ENCODE measurements at regions of chr2 and their contacts with region 1.

Region 1: GRCh38 chr2:25878361-25879132 is at the start of gene ASXL2:
- DNase-seq: peak; percentile 97
- ATAC-seq: peak; percentile 92
- H3K4me3 ChIP-seq: peak within 1 kb of the TSS; percentile 97 to 100 (median 99)
- H3K27ac ChIP-seq: peak within 1 kb of the TSS; percentile 88
- H3K4me1 ChIP-seq: peaks cover 65% of the 10 kb centered on the region
- H3K27me3 ChIP-seq: no peaks in the 10 kb centered on the region; a peak in 1 of 5 replicates
- CTCF ChIP-seq: peak; percentile 45
- EP300 ChIP-seq: no peak
- POLR2A ChIP-seq: peak; percentile 95 to 96
- RAD21 ChIP-seq: peak; percentile 58
- total RNA-seq, gene ASXL2: 12.1 and 20.6 TPM in 2 replicates

Region 2: DNA sequence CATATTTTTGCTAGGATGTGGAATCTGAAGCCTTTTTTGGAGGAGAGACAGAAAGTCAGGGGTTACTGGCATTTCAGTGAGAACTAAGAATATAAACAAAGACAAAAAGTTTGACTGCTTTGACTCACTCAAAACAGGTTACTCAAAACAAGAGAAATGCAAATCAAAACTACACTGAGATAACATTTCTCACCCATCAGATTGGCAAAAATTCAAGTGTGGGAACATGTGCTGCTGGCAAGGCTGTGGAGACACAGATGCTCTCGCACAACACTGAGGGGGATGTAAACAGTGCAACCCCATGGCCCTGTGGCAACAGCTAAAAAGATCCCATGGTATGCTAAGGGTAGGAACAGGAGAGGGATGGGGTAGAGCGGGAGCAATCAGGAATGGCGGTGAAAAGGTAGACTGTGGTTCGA is 291.8 kb before region 1 on chr2:
- CTCF ChIA-PET with region 1: no interaction called
- POLR2A ChIA-PET with region 1: no interaction called
- in situ Hi-C with region 1: no loop called
- intact Hi-C with region 1: no loop called
- DNase-seq: no peak
- ATAC-seq: no peak; the same call in 2 of the 3 replicates
- H3K4me3 ChIP-seq: no peak overlapping the region
- H3K27ac ChIP-seq: no peak overlapping the region
- H3K4me1 ChIP-seq: no peaks in the 10 kb centered on the region
- H3K27me3 ChIP-seq: no peaks in the 10 kb centered on the region
- CTCF ChIP-seq: no peak
- EP300 ChIP-seq: no peak
- POLR2A ChIP-seq: no peak
- RAD21 ChIP-seq: no peak

Region 3: GRCh38 chr2:25867396-25868003 is 11.0 kb before region 1 on chr2:
- CTCF ChIA-PET with region 1: no interaction called
- POLR2A ChIA-PET with region 1: interaction called, 30 read pairs
- in situ Hi-C with region 1: no loop called
- intact Hi-C with region 1: no loop called
- DNase-seq: no peak
- ATAC-seq: no peak
- H3K4me3 ChIP-seq: no peak overlapping the region
- H3K27ac ChIP-seq: no peak overlapping the region
- H3K4me1 ChIP-seq: peaks cover 24% of the 10 kb centered on the region
- H3K27me3 ChIP-seq: no peaks in the 10 kb centered on the region
- CTCF ChIP-seq: no peak
- EP300 ChIP-seq: no peak
- POLR2A ChIP-seq: no peak
- RAD21 ChIP-seq: no peak

Region 4: GRCh38 chr2:25936889-25937545 is 58.5 kb after region 1 on chr2:
- CTCF ChIA-PET with region 1: no interaction called
- POLR2A ChIA-PET with region 1: interaction called, 10 read pairs
- in situ Hi-C with region 1: no loop called
- intact Hi-C with region 1: no loop called
- DNase-seq: no peak
- ATAC-seq: peak; percentile 44; the same call in 1 of the 3 replicates
- H3K4me3 ChIP-seq: no peak overlapping the region
- H3K27ac ChIP-seq: no peak overlapping the region
- H3K4me1 ChIP-seq: peaks cover 35% of the 10 kb centered on the region
- H3K27me3 ChIP-seq: no peaks in the 10 kb centered on the region
- CTCF ChIP-seq: no peak
- EP300 ChIP-seq: no peak
- POLR2A ChIP-seq: no peak
- RAD21 ChIP-seq: no peak

Region 5: GRCh38 chr2:26033818-26034636 is 155.5 kb after region 1 on chr2 and contains the start of gene RAB10:
- CTCF ChIA-PET with region 1: no interaction called
- POLR2A ChIA-PET with region 1: interaction called, 19 read pairs
- in situ Hi-C with region 1: no loop called
- intact Hi-C with region 1: no loop called
- DNase-seq: peak; percentile 99
- ATAC-seq: peak; percentile 89
- H3K4me3 ChIP-seq: peak within 1 kb of the TSS; percentile 82 to 94 (median 91)
- H3K27ac ChIP-seq: peak within 1 kb of the TSS; percentile 85
- H3K4me1 ChIP-seq: peaks cover 37% of the 10 kb centered on the region
- H3K27me3 ChIP-seq: peaks cover 0 to 5% of the 10 kb centered on the region in 2 experiments; a peak in 2 of 5 replicates
- CTCF ChIP-seq: peak; percentile 22; the same call in 1 of the 2 replicates
- EP300 ChIP-seq: peak; percentile 6 to 48; a peak in 1 of 4 replicates
- POLR2A ChIP-seq: peak; percentile 96 to 98
- RAD21 ChIP-seq: peak; percentile 68; the same call in 1 of the 2 replicates
- total RNA-seq, gene RAB10: 106 and 120 TPM in 2 replicates

Measured in HepG2 (cell line).